A549 (cell line): ENCODE measurements at regions of chr9 and their contacts with region 1.

Region 1: GRCh38 chr9:127869310-127870152 is 7.9 kb downstream of the AK1 start:
- DNase-seq: peak; percentile 81 to 96
- ATAC-seq: peak; percentile 88 to 97
- H3K4me3 ChIP-seq: no peak overlapping the region
- H3K27ac ChIP-seq: peak overlapping the region in 1 of 2 experiments; percentile 45; a peak in 1 of 6 replicates
- H3K4me1 ChIP-seq: peaks cover 7% of the 10 kb centered on the region
- CTCF ChIP-seq: peak; percentile 82
- EP300 ChIP-seq: no peak
- POLR2A ChIP-seq: no peak
- RAD21 ChIP-seq: peak; percentile 89 to 96

Region 2: DNA sequence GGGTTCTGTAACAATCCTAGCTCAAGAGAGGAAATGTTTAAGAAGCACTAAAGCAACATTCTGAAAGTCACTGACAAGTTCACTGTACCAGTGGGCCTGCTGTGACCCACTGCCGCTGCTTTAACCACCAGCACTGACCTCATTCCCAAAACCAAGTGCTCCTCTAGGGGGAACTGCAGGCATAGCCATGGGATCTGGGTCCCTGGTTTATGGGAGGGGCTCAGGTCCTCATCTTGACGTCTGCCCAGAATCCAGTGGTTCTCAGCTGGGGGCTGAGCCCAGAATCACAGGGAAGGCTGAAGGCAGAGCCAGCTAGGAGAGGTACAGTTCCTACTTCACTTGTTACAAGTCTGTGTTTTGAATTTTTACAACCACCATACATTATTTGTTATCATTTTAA is 508.7 kb before region 1 on chr9:
- CTCF ChIA-PET with region 1: no interaction called
- POLR2A ChIA-PET with region 1: no interaction called
- DNase-seq: peak; percentile 38 to 40
- ATAC-seq: peak; percentile 90 to 91
- H3K4me3 ChIP-seq: no peak overlapping the region
- H3K27ac ChIP-seq: 0 out of 6 replicates have a peak overlapping the region, but pooled peaks of 1 of the 2 experiments have one; percentile 8
- H3K4me1 ChIP-seq: no peaks in the 10 kb centered on the region
- CTCF ChIP-seq: peak; percentile 31; the same call in 2 of the 3 replicates
- EP300 ChIP-seq: no peak
- POLR2A ChIP-seq: no peak
- RAD21 ChIP-seq: peak; percentile 52 to 71; a peak in 4 of 5 replicates

Region 3: GRCh38 chr9:127586537-127586936 is 283.0 kb before region 1 on chr9:
- CTCF ChIA-PET with region 1: interaction called, 53 read pairs
- POLR2A ChIA-PET with region 1: no interaction called
- DNase-seq: peak; percentile 81 to 82
- ATAC-seq: peak; percentile 93 to 94
- H3K4me3 ChIP-seq: no peak overlapping the region
- H3K27ac ChIP-seq: peak overlapping the region; percentile 46 to 73; a peak in 4 of 6 replicates
- H3K4me1 ChIP-seq: peaks cover 38% of the 10 kb centered on the region; the same call in 2 of the 3 replicates
- CTCF ChIP-seq: peak; percentile 84
- EP300 ChIP-seq: no peak
- POLR2A ChIP-seq: no peak
- RAD21 ChIP-seq: peak; percentile 94 to 98

Region 4: GRCh38 chr9:127742435-127743088 is 127.0 kb before region 1 on chr9:
- CTCF ChIA-PET with region 1: interaction called, 70 read pairs
- POLR2A ChIA-PET with region 1: no interaction called
- DNase-seq: peak; percentile 88 to 94
- ATAC-seq: peak; percentile 73 to 87
- H3K4me3 ChIP-seq: peak overlapping the region; percentile 42
- H3K27ac ChIP-seq: peak overlapping the region; percentile 6 to 71; a peak in 4 of 6 replicates
- H3K4me1 ChIP-seq: peaks cover 31% of the 10 kb centered on the region
- CTCF ChIP-seq: no peak
- EP300 ChIP-seq: no peak
- POLR2A ChIP-seq: no peak
- RAD21 ChIP-seq: no peak

Region 5: DNA sequence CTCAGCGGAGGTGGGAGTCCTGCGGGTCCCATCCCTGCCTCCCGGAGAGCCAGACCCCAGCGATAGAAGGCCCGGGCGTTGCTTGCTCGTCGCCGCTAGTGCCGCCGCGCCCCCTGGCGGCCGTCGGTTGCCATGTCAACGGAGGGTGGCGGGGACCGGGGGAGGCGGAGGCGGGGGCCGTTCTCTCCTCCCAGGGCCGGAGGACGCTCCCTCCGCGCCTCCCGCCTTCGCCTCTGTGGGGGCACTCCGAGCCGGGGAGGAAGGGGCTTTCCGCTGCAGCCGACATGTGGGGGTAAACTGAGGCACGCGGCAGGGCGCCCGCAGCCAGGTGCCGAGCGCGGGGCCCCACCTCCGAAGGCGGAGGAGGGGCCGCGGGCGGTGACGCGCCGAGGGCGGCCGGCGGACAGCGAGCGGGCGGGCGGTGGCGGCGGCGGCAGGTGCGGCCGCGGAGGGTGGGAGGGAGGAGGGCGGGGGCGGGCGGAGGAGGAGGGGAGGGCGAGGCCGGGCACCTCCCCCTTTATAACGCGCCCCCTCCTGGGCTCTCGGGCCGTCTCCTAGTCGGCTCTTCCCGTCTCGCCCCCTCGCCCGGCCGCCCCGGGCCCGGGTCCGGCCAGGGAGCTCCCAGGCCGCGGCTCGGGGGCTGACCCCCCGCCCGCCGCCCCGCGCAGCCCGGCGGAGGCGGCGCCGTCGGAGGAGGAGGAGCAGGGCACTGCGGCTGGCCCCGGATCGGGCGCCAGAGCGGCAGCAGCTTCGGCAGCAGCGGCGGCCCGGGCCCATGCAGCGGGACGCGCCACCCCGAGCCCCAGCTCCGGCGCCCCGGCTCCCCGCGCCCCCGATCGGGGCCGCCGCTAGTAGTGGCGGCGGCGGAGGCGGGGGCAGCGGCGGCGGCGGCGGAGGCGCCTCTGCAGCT is 84.3 kb before region 1 on chr9:
- CTCF ChIA-PET with region 1: interaction called, 67 read pairs
- POLR2A ChIA-PET with region 1: no interaction called
- DNase-seq: peak; percentile 85 to 92
- ATAC-seq: peak; percentile 72 to 77
- H3K4me3 ChIP-seq: peak overlapping the region; percentile 88
- H3K27ac ChIP-seq: peak overlapping the region; percentile 94 to 99
- H3K4me1 ChIP-seq: peaks cover 11% of the 10 kb centered on the region; the same call in 2 of the 3 replicates
- CTCF ChIP-seq: peak; percentile 90
- EP300 ChIP-seq: no peak
- POLR2A ChIP-seq: peak; percentile 28
- RAD21 ChIP-seq: peak; percentile 76 to 96

Region 6: GRCh38 chr9:127828262-127829031 is 41.1 kb before region 1 on chr9:
- CTCF ChIA-PET with region 1: interaction called, 25 read pairs
- POLR2A ChIA-PET with region 1: no interaction called
- DNase-seq: peak; percentile 62 to 87
- ATAC-seq: peak; percentile 68 to 79
- H3K4me3 ChIP-seq: peak overlapping the region; percentile 32
- H3K27ac ChIP-seq: peak overlapping the region; percentile 66 to 77
- H3K4me1 ChIP-seq: peaks cover 9% of the 10 kb centered on the region
- CTCF ChIP-seq: no peak
- EP300 ChIP-seq: no peak
- POLR2A ChIP-seq: peak; percentile 24; the same call in 1 of the 2 replicates
- RAD21 ChIP-seq: no peak

Region 7: DNA sequence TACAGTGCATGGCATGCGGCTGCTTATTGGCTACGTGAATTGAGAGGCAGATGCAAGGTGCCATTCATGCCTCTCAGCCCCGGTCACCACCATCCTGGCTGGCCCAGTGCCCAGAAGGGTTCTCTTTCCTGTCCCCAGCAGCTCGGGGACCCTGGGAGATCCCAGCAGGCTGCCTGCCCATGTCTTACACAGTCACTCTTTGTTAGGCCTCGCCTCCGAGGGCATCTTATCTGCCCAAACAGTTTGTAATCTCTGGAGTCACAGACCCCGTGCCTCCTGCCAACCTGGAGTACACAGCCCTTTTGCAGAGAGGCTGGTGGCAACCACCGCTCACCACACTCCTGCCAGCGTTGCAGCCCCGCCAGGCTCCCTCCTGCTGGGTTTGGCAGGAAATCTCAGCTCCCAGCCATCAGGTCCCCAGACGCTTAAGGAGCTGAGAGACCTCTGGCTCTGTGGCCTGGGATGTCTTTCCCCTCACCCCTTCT is 14.9 kb after region 1 on chr9:
- CTCF ChIA-PET with region 1: interaction called, 50 read pairs
- POLR2A ChIA-PET with region 1: no interaction called
- DNase-seq: no peak
- ATAC-seq: peak; percentile 16 to 30; a peak in 2 of 6 replicates
- H3K4me3 ChIP-seq: no peak overlapping the region
- H3K27ac ChIP-seq: no peak overlapping the region
- H3K4me1 ChIP-seq: peaks cover 5% of the 10 kb centered on the region; the same call in 1 of the 3 replicates
- CTCF ChIP-seq: no peak
- EP300 ChIP-seq: no peak
- POLR2A ChIP-seq: no peak
- RAD21 ChIP-seq: no peak

Region 8: GRCh38 chr9:127916665-127917613 is 47.4 kb after region 1 on chr9 and contains the start of gene ST6GALNAC4:
- CTCF ChIA-PET with region 1: interaction called, 72 read pairs
- POLR2A ChIA-PET with region 1: no interaction called
- DNase-seq: peak; percentile 74 to 89
- ATAC-seq: peak; percentile 42 to 74
- H3K4me3 ChIP-seq: peak within 1 kb of the TSS; percentile 65
- H3K27ac ChIP-seq: peak within 1 kb of the TSS; percentile 82 to 90
- H3K4me1 ChIP-seq: peaks cover 72% of the 10 kb centered on the region
- CTCF ChIP-seq: no peak
- EP300 ChIP-seq: no peak
- POLR2A ChIP-seq: peak; percentile 43; the same call in 1 of the 2 replicates
- RAD21 ChIP-seq: no peak
- polyA plus RNA-seq, gene ST6GALNAC4: 11.0 and 12.5 TPM in 2 replicates

Region 9: DNA sequence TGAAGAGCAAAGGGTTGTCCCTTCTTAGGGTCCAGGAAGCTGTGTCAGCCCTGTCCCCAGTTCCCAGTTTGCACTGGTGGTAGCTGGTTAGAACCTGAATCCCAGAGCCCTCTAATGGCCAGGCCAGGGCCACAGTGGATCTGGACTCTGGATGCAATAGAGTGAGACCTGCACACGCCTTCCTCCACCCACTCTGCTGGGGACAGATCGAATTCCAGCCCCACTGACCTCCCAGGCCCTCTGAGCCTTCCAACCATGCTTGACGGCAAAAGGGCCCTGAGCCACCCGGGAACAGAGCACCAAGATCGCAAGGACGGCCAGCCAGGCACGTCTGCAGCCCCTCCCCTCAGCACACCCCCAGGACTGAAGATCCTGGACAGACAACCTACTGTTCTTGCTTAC is 173.9 kb after region 1 on chr9:
- CTCF ChIA-PET with region 1: no interaction called
- POLR2A ChIA-PET with region 1: no interaction called
- DNase-seq: no peak
- ATAC-seq: peak; percentile 73 to 83
- H3K4me3 ChIP-seq: no peak overlapping the region
- H3K27ac ChIP-seq: peak overlapping the region in 1 of 2 experiments; percentile 48; a peak in 4 of 6 replicates
- H3K4me1 ChIP-seq: no peaks in the 10 kb centered on the region; the same call in 2 of the 3 replicates
- CTCF ChIP-seq: no peak
- EP300 ChIP-seq: no peak
- POLR2A ChIP-seq: no peak
- RAD21 ChIP-seq: no peak